ENCODE measurements at regions of chr3 and their contacts with region 1.

Region 1: GRCh38 chr3:98213276-98213675 is 46.8 kb downstream of the OR5H15 start:
- DNase-seq: no peak
- ATAC-seq: no peak
- H3K4me3 ChIP-seq: no peak overlapping the region
- H3K27ac ChIP-seq: no peak overlapping the region
- H3K4me1 ChIP-seq: no peaks in the 10 kb centered on the region
- H3K27me3 ChIP-seq: no peaks in the 10 kb centered on the region

Region 2: DNA sequence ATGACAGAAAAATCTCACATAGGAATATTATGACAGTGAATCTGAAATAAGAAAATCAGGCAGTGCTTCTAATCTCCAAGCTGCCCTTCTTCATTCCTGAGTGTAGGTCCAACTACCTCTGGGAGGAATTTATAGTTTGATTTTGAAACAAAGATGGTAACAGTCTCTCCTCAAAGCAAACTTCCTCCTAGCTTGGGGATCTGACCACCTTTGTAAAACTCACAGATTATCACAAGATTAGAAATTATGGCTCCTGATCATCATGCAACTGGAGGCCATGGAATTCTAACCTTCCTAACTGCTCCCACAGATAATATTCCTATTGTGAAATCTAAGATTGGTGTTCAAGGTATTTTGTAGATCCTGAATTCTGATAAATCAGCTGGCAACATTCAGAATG is 58.6 kb before region 1 on chr3:
- intact Hi-C with region 1: loop called in 2 of 4 experiments (anchors 2 kb)
- DNase-seq: no peak
- ATAC-seq: no peak
- H3K4me3 ChIP-seq: no peak overlapping the region
- H3K27ac ChIP-seq: no peak overlapping the region
- H3K4me1 ChIP-seq: no peaks in the 10 kb centered on the region
- H3K27me3 ChIP-seq: no peaks in the 10 kb centered on the region

Region 3: GRCh38 chr3:98329392-98330124 is 116.3 kb after region 1 on chr3:
- intact Hi-C with region 1: no loop called
- DNase-seq: peak; percentile 29 to 52 (median 42)
- ATAC-seq: peak; percentile 16 to 63
- H3K4me3 ChIP-seq: no peak overlapping the region
- H3K27ac ChIP-seq: no peak overlapping the region
- H3K4me1 ChIP-seq: no peaks in the 10 kb centered on the region
- H3K27me3 ChIP-seq: no peaks in the 10 kb centered on the region

Region 4: GRCh38 chr3:98869391-98869790 is 656.1 kb after region 1 on chr3:
- intact Hi-C with region 1: no loop called
- DNase-seq: no peak
- ATAC-seq: no peak
- H3K4me3 ChIP-seq: no peak overlapping the region
- H3K27ac ChIP-seq: no peak overlapping the region
- H3K4me1 ChIP-seq: no peaks in the 10 kb centered on the region
- H3K27me3 ChIP-seq: no peaks in the 10 kb centered on the region